Mammary epithelial cell (primary cell): ENCODE measurements at regions of chr12 and their contacts with region 1.

Region 1: DNA sequence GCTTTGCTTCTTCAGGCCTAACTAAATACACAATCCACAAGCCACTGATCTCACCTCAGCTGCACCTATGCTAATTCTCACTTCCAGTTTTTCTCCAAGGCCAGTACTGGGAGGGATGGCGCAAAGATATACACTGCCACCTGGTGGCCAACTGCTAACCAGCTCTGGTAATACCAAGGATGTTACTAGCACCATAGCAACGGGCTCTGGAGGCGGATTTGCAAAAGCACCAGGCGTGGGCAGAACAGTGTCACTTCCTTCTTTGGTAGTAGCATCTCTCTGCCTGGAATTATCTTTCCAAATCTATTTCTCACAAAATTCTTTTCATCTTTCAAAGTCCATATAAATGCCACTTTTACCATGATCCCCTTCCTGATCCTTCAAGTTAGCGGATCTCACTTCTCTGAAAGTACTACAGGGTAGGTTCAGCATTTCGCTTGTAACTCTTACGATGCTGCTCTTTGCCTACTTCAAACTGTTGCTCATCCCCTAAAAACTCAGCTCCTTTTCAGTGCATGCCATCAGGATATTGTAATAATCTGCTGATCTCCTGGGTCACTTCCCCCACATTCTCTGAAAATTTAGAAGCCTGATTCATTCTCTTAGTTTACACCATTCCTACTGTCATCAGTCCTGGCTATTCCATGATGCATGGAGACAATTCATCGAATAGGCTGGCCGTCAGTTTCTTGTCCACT is 37.1 kb upstream of the FOXJ2 start:
- DNase-seq: peak; percentile 77
- H3K4me3 ChIP-seq: no peak overlapping the region
- H3K27ac ChIP-seq: peak overlapping the region; percentile 40
- H3K4me1 ChIP-seq: peaks cover 10% of the 10 kb centered on the region
- H3K27me3 ChIP-seq: no peaks in the 10 kb centered on the region
- CTCF ChIP-seq: peak; percentile 69 to 73

Region 2: DNA sequence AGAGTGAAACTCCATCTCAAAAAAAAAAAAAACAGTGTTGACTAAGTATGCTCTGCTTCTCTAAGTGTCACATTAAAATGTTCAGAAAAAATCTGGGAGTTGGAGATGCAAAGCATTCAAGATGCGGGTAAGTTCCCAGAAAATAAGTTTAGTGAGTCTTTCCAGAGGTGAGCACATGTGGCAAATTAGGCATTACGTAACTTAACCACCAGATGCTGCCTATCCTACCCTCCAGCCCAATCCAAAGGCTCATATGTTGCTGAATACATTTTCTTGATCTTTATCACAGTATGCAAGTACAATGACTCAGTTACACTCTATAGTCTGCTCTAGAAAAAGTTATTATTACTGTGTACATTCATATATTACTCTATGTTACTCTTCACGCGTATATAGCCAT is 126.3 kb before region 1 on chr12:
- CTCF ChIA-PET with region 1: no interaction called
- dilution Hi-C with region 1: no loop called
- in situ Hi-C with region 1: loop called in 1 of 2 experiments (anchors 10 kb)
- intact Hi-C with region 1: no loop called
- DNase-seq: peak; percentile 71
- H3K4me3 ChIP-seq: no peak overlapping the region
- H3K27ac ChIP-seq: no peak overlapping the region
- H3K4me1 ChIP-seq: no peaks in the 10 kb centered on the region
- H3K27me3 ChIP-seq: peaks cover 11% of the 10 kb centered on the region
- CTCF ChIP-seq: no peak